ENCODE measurements at regions of chr14 and their contacts with region 1.

Region 1: GRCh38 chr14:93042968-93043940 is 72.5 kb downstream of the ITPK1 start:
- DNase-seq: peak; percentile 41
- H3K4me3 ChIP-seq: no peak overlapping the region
- CTCF ChIP-seq: no peak

Region 2: GRCh38 chr14:92944976-92945375 is 98.3 kb before region 1 on chr14:
- in situ Hi-C with region 1: loop called (anchors 5 kb)
- DNase-seq: no peak
- H3K4me3 ChIP-seq: no peak overlapping the region
- CTCF ChIP-seq: no peak

Region 3: GRCh38 chr14:93090826-93091555 is 47.7 kb after region 1 on chr14:
- in situ Hi-C with region 1: loop called (anchors 5 kb)
- DNase-seq: no peak
- H3K4me3 ChIP-seq: no peak overlapping the region
- CTCF ChIP-seq: no peak

Region 4: DNA sequence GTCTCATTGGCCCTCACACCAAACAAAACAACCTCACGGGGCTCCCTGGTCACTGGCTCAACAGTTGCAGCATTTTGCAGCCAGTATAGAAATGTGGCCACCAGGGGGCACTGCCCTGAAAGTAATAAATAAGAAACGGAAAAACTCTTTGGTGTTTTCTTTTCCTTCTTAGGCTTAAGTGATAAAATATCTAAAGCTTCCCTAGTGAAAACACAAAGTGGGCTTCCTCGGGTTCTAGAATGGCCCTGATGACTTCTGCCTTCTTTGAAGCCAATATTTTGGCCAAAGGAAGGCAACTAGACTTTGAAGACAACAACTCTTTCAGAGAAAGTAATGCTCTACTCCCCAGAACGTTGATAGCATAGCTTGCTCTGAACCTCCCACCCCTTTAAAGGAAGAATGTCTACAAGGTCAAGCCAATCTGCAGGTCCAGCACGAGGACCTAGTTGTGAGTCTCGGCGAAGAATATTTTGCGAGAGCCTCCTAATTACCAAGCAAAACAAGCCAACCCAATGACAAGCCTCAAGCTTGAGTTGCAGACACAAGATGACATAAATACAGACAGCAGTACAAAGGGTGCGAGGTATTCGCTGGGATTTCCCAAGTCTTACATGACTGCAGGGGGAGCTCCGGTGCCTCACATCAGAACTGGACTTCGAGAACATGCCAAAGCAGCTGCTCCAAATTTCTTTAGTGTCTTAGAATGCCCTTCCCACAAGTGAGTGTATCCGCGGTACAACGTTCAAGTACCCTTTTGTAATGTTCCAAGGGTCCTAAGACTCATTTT is 69.8 kb after region 1 on chr14:
- in situ Hi-C with region 1: loop called (anchors 5 kb)
- DNase-seq: peak; percentile 68
- H3K4me3 ChIP-seq: peak overlapping the region; percentile 67
- CTCF ChIP-seq: peak; percentile 69